ENCODE measurements at regions of chr17 and their contacts with region 1.

Region 1: GRCh38 chr17:77700165-77700881 is 258.2 kb upstream of the TNRC6C start:
- DNase-seq: no peak
- H3K4me3 ChIP-seq: no peak overlapping the region
- H3K27ac ChIP-seq: no peak overlapping the region
- H3K4me1 ChIP-seq: no peaks in the 10 kb centered on the region
- H3K27me3 ChIP-seq: peaks cover 0 to 8% of the 10 kb centered on the region in 2 donors
- CTCF ChIP-seq: no peak
- POLR2A ChIP-seq: no peak

Region 2: GRCh38 chr17:77235370-77235941 is 464.9 kb before region 1 on chr17:
- intact Hi-C with region 1: loop called (anchors 10 kb)
- DNase-seq: no peak
- H3K4me3 ChIP-seq: peak overlapping the region; percentile 20 to 54 (median 21)
- H3K27ac ChIP-seq: peak overlapping the region in 1 of 2 donors; percentile 59
- H3K4me1 ChIP-seq: no peaks in the 10 kb centered on the region
- H3K27me3 ChIP-seq: no peaks in the 10 kb centered on the region
- CTCF ChIP-seq: no peak
- POLR2A ChIP-seq: no peak